Aorta (tissue), 5 donors: ENCODE measurements at regions of chr9 and their contacts with region 1.

Region 1: GRCh38 chr9:36166101-36166927 is 2.9 kb upstream of the CCIN start:
- DNase-seq: peak; percentile 89 to 95
- ATAC-seq: peak; percentile 97
- H3K4me3 ChIP-seq: peak overlapping the region; percentile 21 to 42
- H3K27ac ChIP-seq: no peak overlapping the region
- H3K4me1 ChIP-seq: no peaks in the 10 kb centered on the region
- H3K27me3 ChIP-seq: no peaks in the 10 kb centered on the region

Region 2: DNA sequence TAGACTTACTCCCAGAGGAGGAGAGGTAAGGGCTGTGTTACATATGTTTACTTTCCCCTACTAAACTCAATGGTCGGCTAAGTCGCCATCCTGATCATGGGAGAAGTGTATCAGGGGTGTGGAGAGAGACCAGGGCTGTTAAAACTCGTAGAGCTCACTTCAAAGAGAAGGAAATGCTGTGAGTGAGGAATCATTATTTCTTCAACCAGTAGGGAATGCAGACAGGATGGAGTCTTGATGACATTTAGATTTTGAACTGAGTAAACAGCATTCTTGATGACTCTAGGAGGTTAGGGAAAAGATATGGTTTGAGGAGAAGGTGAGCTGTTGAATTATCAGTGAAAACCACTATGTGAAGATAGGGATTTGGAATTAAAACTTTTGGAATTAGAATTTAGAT is 112.3 kb before region 1 on chr9:
- intact Hi-C with region 1: no loop called
- DNase-seq: no peak
- ATAC-seq: no peak
- H3K4me3 ChIP-seq: no peak overlapping the region
- H3K27ac ChIP-seq: no peak overlapping the region
- H3K4me1 ChIP-seq: no peaks in the 10 kb centered on the region
- H3K27me3 ChIP-seq: no peaks in the 10 kb centered on the region

Region 3: DNA sequence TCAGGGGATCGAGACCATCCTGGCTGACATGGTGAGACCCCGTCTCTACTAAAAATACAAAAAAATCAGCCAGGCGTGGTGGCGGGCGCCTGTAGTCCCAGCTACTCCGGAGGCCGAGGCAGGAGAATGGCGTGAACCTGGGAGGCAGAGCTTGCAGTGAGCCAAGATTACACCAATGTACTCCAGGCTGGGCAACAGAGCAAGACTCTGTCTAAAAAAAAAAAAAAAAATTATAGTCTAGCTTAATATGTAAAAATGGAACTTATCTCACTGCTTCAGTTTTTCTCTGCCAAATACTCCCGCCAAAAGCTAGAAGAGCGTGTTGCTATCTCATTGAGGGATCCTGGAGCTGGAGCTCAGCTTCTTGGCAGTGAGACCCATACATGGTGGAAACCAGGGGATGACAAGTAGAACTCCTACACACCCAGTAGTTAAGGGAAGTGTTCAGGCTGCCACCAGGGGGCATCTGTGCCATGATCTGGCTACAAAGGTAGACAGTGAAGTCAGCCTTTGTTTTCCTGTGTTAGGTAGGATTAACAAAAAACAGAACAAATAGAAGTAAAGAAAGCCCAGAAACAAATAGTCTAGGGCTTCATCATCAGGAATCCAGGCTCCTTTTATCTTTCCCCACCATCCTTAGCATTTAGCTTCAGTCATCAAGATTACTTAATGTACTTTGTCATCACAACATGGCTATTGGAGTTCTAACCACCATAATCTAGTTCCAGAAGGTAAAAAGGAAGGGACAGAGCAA is 63.4 kb before region 1 on chr9:
- intact Hi-C with region 1: loop called (anchors 1 to 2 kb)
- DNase-seq: peak; percentile 91 to 94
- ATAC-seq: peak; percentile 93
- H3K4me3 ChIP-seq: no peak overlapping the region
- H3K27ac ChIP-seq: no peak overlapping the region
- H3K4me1 ChIP-seq: no peaks in the 10 kb centered on the region
- H3K27me3 ChIP-seq: no peaks in the 10 kb centered on the region

Region 4: DNA sequence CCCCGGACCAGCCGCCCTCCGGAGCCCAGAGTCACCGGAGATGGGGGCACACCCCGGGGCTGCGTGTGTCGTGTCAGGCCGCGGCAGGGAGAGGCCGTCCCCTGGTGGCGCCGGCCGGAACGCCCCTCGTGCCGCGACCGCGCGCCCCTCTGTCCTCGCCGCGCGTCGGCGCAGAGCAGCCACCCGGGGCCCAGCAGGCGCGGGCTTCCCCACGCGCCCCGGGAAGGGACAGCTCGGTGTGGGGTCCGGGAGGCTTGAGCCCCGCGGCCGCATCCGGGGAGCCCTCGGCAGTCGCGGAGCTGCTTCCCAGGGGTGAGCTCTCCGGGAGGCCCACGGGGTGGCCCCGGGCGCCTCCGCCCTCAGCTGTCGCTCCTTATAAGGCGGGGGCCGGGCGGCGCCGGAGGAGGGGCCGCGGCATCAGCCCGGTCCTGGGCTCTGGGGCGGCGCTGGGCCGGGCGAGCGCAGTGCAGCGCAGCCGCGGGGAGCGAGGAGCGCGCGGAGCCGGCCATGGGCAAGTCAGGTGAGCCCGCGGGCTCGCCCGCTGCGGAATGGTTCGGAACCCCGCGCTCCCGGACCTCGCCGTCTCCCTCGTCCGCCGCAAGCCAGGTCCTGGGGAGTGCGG is 29.9 kb before region 1 on chr9 and contains the start of gene GLIPR2:
- intact Hi-C with region 1: loop called in 1 of 2 experiments (anchors 2 kb)
- DNase-seq: peak; percentile 89 to 93
- ATAC-seq: peak; percentile 95
- H3K4me3 ChIP-seq: peak within 1 kb of the TSS; percentile 67 to 84
- H3K27ac ChIP-seq: no peak within 1 kb of the TSS
- H3K4me1 ChIP-seq: no peaks in the 10 kb centered on the region
- H3K27me3 ChIP-seq: no peaks in the 10 kb centered on the region
- total RNA-seq, gene GLIPR2: 34.0 to 35.8 TPM

Region 5: DNA sequence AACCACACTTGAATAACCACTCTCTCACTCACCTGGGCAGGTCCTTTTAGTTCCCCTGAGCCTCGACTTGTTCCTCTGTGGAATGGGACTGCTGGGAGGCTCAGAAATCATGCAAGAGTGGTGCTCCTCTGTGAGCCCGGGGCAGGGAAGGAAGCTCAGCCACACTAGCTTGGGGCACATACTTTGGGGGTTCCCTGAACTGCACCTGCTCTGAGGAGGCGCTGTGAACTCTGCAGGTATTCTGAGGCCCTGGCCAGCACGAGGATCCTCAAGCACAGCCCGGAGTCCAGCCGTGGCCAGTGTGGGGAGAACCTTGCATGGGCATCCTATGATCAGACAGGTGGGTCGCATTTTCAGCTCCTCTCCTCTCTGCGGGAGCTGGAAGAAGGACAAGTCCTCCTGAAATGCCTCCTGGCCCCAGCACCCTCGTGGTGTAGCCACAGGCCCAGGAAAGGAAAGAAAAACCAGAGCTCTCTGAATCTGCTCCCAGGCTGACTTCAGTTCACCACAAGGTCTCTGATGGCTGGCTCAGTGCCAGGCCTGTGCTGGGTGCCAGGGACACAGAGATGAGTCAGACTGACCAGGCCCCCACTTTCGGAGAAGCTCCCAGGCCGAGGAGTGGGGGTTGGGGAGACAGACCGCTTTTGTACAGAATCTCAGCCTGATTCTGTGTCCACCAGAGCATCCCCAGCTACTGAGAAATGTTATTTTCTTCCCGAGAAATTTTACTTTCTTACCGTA is 17.8 kb before region 1 on chr9:
- intact Hi-C with region 1: loop called in 1 of 2 experiments (anchors 2 kb)
- DNase-seq: peak; percentile 97 to 99
- ATAC-seq: peak; percentile 91
- H3K4me3 ChIP-seq: no peak overlapping the region
- H3K27ac ChIP-seq: peak overlapping the region in 1 of 2 donors; percentile 71
- H3K4me1 ChIP-seq: peaks cover 0 to 4% of the 10 kb centered on the region in 2 donors
- H3K27me3 ChIP-seq: no peaks in the 10 kb centered on the region

Region 6: GRCh38 chr9:36204906-36205547 is 38.7 kb after region 1 on chr9:
- intact Hi-C with region 1: no loop called
- DNase-seq: no peak
- ATAC-seq: peak; percentile 21
- H3K4me3 ChIP-seq: no peak overlapping the region
- H3K27ac ChIP-seq: peak overlapping the region in 1 of 2 donors; percentile 32
- H3K4me1 ChIP-seq: peaks cover 1 to 4% of the 10 kb centered on the region in 2 donors
- H3K27me3 ChIP-seq: no peaks in the 10 kb centered on the region